B cell (primary cell): ENCODE measurements at regions of chr20 and their contacts with region 1.

Region 1: DNA sequence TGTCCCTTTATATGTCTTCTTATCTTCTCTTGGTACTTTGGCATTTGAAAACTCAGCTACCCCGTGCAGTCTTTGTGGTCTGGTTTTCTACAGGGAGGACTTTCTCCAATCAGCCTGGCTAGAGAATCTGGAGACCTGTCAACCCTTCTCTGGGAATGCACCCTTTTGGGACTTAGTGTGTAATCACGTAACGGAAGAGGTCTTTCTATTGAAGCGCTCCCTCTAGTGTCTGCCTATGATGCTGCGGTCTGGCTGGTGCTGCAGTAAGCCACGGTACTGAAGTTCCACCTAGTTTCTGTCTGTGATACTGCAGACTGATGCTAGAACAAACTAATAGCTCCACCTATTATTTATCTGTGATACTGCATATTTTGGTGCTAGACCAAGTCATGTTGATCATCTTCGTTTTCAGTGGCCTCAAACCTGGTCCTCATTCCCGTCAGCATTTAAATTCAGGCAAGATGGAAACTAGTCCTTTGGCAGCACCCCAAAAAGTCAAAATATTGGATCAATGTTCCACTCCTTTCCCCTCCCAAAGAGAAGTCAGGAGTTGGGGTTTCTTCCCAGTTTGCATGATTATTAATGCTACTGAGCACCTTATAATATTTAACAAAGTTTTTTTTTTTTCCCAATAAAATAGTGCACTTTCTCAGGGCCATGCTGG is 12.5 kb upstream of the SIRPB2 start:
- DNase-seq: peak; percentile 91
- ATAC-seq: peak; percentile 100
- H3K4me3 ChIP-seq: no peak overlapping the region
- H3K4me3 Mint-ChIP-seq: no peak overlapping the region
- H3K27ac ChIP-seq: no peak overlapping the region
- H3K27ac Mint-ChIP-seq: no peak overlapping the region
- H3K4me1 ChIP-seq: peaks cover 0 to 3% of the 10 kb centered on the region in 2 donors
- H3K4me1 Mint-ChIP-seq: peaks cover 2% of the 10 kb centered on the region
- H3K27me3 ChIP-seq: peaks cover 0 to 29% (median 10%) of the 10 kb centered on the region in 4 experiments
- H3K27me3 Mint-ChIP-seq: peaks cover 58% of the 10 kb centered on the region
- CTCF ChIP-seq: peak; percentile 100

Region 2: DNA sequence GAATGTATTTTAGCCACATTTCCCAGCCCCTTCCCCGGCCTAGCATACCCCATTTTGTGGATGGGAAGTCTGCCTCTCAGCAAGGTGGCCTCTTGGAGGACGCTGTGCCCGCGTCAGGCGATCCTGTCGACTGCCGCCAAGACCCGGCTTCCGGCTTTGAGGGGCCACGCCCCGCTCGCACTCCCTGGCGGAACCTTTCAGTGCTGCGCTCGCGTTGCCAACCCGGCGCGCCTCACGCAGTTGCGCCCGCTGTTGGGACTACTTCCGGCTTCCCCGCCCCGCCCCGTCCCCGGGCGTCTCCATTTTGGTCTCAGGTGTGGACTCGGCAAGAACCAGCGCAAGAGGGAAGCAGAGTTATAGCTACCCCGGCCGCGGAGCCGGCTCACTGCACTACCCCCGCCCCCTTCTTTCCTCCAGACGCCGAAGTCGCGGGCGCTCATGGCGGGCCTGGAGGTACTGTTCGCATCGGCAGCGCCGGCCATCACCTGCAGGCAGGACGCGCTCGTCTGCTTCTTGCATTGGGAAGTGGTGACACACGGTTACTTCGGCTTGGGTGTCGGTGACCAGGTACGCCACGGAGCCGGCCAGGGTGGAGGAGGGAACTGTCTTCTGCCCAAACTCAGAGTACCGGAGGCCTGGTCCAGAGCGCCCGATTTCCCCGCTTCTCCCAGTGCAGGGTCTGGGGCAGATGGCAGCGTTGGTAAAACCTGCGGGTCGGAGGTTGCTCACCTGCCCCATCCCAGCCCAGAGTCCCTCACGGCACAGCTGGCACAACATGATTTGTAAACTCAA is 385.2 kb before region 1 on chr20 and contains the start of gene PSMF1:
- CTCF ChIA-PET with region 1: interaction called, 4 read pairs
- POLR2A ChIA-PET with region 1: no interaction called
- intact Hi-C with region 1: loop called (anchors 1 kb)
- DNase-seq: peak; percentile 97
- ATAC-seq: peak; percentile 94
- H3K4me3 ChIP-seq: peak within 1 kb of the TSS; percentile 78 to 97 (median 85)
- H3K4me3 Mint-ChIP-seq: peak within 1 kb of the TSS; percentile 91
- H3K27ac ChIP-seq: peak within 1 kb of the TSS; percentile 70 to 91
- H3K27ac Mint-ChIP-seq: peak within 1 kb of the TSS; percentile 93
- H3K4me1 ChIP-seq: peaks cover 42 to 53% of the 10 kb centered on the region in 2 donors
- H3K4me1 Mint-ChIP-seq: peaks cover 62% of the 10 kb centered on the region
- H3K27me3 ChIP-seq: no peaks in the 10 kb centered on the region
- H3K27me3 Mint-ChIP-seq: no peaks in the 10 kb centered on the region
- CTCF ChIP-seq: no peak
- total RNA-seq, gene PSMF1: 113 and 114 TPM in 2 replicates

Region 3: GRCh38 chr20:1325173-1326030 is 178.3 kb before region 1 on chr20:
- CTCF ChIA-PET with region 1: interaction called, 8 read pairs
- POLR2A ChIA-PET with region 1: no interaction called
- intact Hi-C with region 1: loop called (anchors 1 kb)
- DNase-seq: peak; percentile 99
- ATAC-seq: peak; percentile 89
- H3K4me3 ChIP-seq: peak overlapping the region; percentile 75 to 99 (median 93)
- H3K4me3 Mint-ChIP-seq: no peak overlapping the region
- H3K27ac ChIP-seq: peak overlapping the region; percentile 92 to 98
- H3K27ac Mint-ChIP-seq: no peak overlapping the region
- H3K4me1 ChIP-seq: peaks cover 27 to 28% of the 10 kb centered on the region in 2 donors
- H3K4me1 Mint-ChIP-seq: peaks cover 31% of the 10 kb centered on the region
- H3K27me3 ChIP-seq: no peaks in the 10 kb centered on the region
- H3K27me3 Mint-ChIP-seq: no peaks in the 10 kb centered on the region
- CTCF ChIP-seq: no peak

Region 4: DNA sequence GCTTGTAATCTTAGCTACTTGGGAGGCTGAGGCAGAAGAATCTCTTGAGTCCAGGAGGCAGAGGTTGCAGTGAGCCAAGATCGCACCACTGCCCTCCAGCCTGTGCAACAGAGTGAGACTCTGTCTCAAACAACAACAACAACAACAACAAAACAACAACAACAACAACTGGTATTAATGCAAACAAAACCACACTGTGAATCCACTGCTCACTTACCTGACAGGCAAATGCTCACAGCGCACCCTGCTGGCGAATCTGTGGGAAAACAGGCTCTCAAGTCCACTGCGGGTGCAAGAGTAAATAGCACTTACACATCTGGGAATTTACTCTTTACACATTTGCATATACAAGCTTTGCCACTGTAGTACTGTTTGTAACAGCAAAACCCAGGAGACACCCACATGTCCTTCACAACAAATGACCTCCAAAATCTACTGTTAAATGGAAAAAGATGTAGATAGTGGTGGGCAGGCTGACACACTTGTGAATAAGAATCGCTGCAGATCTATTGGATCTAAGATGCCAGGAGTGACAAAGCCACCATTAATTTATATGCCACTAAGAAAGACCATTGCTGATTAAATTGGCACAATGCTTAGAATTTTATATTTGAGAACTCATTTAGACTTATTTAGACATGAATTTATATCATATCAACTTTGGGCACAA is 66.3 kb before region 1 on chr20:
- CTCF ChIA-PET with region 1: interaction called, 71 read pairs
- POLR2A ChIA-PET with region 1: interaction called, 5 read pairs
- intact Hi-C with region 1: loop called (anchors 1 kb)
- DNase-seq: peak; percentile 83
- ATAC-seq: peak; percentile 51
- H3K4me3 ChIP-seq: no peak overlapping the region
- H3K4me3 Mint-ChIP-seq: no peak overlapping the region
- H3K27ac ChIP-seq: no peak overlapping the region
- H3K27ac Mint-ChIP-seq: peak overlapping the region; percentile 50
- H3K4me1 ChIP-seq: peaks cover 20 to 23% of the 10 kb centered on the region in 2 donors
- H3K4me1 Mint-ChIP-seq: peaks cover 35% of the 10 kb centered on the region
- H3K27me3 ChIP-seq: no peaks in the 10 kb centered on the region
- H3K27me3 Mint-ChIP-seq: peaks cover 3% of the 10 kb centered on the region
- CTCF ChIP-seq: peak; percentile 89

Region 5: GRCh38 chr20:1466211-1467081 is 37.2 kb before region 1 on chr20 and contains the start of gene NSFL1C:
- CTCF ChIA-PET with region 1: interaction called, 85 read pairs
- POLR2A ChIA-PET with region 1: interaction called, 4 read pairs
- intact Hi-C with region 1: loop called (anchors 1 kb)
- DNase-seq: peak; percentile 97
- ATAC-seq: peak; percentile 92
- H3K4me3 ChIP-seq: peak within 1 kb of the TSS; percentile 69 to 92 (median 90)
- H3K4me3 Mint-ChIP-seq: peak within 1 kb of the TSS; percentile 90
- H3K27ac ChIP-seq: peak within 1 kb of the TSS; percentile 79 to 92
- H3K27ac Mint-ChIP-seq: peak within 1 kb of the TSS; percentile 93
- H3K4me1 ChIP-seq: peaks cover 49 to 54% of the 10 kb centered on the region in 2 donors
- H3K4me1 Mint-ChIP-seq: peaks cover 69% of the 10 kb centered on the region
- H3K27me3 ChIP-seq: no peaks in the 10 kb centered on the region
- H3K27me3 Mint-ChIP-seq: no peaks in the 10 kb centered on the region
- CTCF ChIP-seq: peak; percentile 100
- total RNA-seq, gene NSFL1C: 80.3 and 84.0 TPM in 2 replicates

Region 6: DNA sequence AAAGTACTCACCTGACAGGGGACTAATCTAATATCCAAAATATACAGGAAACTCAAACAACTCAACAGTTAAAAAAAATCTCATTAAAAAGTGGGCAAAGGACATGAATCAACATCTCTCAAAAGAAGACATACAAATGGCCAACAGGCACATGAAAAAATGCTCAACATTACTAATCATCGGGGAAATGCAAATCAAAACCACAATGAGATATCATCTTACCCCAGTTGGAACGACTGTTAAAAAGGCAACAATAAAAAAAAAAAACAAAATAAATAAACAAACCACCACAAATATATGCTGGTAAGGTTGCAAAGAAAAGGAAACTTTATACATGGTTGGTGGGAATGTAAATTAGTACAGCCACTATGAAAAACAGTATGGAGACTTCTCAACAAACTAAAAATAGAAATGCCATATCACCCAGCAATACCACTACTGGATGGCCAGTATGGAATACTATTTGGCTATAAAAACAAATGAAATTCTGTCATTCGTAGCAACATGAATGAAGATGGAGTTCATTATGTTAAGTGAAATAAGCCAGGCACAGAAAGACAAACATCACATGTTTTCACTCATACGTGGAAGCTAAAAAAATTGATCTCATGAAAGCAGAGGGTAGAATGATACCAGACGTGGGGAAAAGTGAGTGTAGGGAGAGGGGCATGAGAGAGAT is 19.1 kb before region 1 on chr20:
- CTCF ChIA-PET with region 1: interaction called, 15 read pairs
- POLR2A ChIA-PET with region 1: no interaction called
- intact Hi-C with region 1: no loop called
- DNase-seq: no peak
- ATAC-seq: no peak
- H3K4me3 ChIP-seq: no peak overlapping the region
- H3K4me3 Mint-ChIP-seq: no peak overlapping the region
- H3K27ac ChIP-seq: no peak overlapping the region
- H3K27ac Mint-ChIP-seq: no peak overlapping the region
- H3K4me1 ChIP-seq: no peaks in the 10 kb centered on the region
- H3K4me1 Mint-ChIP-seq: peaks cover 2% of the 10 kb centered on the region
- H3K27me3 ChIP-seq: no peaks in the 10 kb centered on the region
- H3K27me3 Mint-ChIP-seq: peaks cover 53% of the 10 kb centered on the region
- CTCF ChIP-seq: no peak

Region 7: DNA sequence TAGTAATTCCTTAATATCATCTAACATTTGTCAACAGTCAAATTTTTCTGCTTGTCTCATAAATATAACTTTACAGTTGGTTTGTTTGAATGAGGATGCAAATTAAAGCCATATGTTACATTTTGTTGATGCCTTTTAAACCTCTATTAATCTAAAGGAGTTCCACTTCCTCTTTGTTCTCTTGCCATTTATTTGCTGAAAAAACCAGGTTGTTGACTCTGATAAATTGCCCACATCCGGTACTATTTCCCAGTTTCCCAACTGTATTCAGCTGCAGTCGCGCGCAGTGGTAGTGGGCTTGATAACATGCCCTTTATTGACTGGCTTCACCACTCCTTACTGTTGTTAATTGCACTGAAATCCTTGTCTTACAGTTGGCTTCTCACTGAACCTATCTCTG is 20.3 kb after region 1 on chr20:
- CTCF ChIA-PET with region 1: interaction called, 12 read pairs
- POLR2A ChIA-PET with region 1: no interaction called
- intact Hi-C with region 1: no loop called
- DNase-seq: peak; percentile 29
- ATAC-seq: no peak
- H3K4me3 ChIP-seq: no peak overlapping the region
- H3K4me3 Mint-ChIP-seq: peak overlapping the region; percentile 42
- H3K27ac ChIP-seq: no peak overlapping the region
- H3K27ac Mint-ChIP-seq: no peak overlapping the region
- H3K4me1 ChIP-seq: peaks cover 13 to 20% of the 10 kb centered on the region in 2 donors
- H3K4me1 Mint-ChIP-seq: peaks cover 25% of the 10 kb centered on the region
- H3K27me3 ChIP-seq: peaks cover 0 to 6% (median 0%) of the 10 kb centered on the region in 4 experiments
- H3K27me3 Mint-ChIP-seq: peaks cover 14% of the 10 kb centered on the region
- CTCF ChIP-seq: no peak

Region 8: DNA sequence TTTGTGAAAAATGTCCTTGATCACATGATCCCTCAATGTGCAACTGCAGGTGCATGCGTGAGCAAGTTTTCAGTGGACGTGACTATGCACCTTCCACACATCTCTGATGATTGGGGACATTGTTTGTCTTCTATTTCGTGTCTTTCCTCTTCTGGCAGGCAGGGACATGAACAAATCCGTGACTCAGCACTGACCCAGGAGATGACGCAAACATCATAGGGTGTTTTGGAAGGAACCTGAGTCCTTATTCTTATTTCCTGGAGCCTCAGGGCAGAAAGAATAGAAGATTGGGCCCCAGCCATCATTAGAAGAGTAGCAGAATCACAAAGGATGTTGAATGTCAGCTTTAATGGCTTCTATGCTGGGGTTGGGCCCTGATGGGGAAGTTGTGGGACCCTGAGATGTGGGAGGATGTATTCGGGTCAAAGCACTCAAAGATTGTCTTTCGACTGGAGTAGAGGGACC is 65.8 kb after region 1 on chr20:
- CTCF ChIA-PET with region 1: no interaction called
- POLR2A ChIA-PET with region 1: no interaction called
- intact Hi-C with region 1: no loop called
- DNase-seq: no peak
- ATAC-seq: no peak
- H3K4me3 ChIP-seq: no peak overlapping the region
- H3K4me3 Mint-ChIP-seq: no peak overlapping the region
- H3K27ac ChIP-seq: no peak overlapping the region
- H3K27ac Mint-ChIP-seq: no peak overlapping the region
- H3K4me1 ChIP-seq: no peaks in the 10 kb centered on the region
- H3K4me1 Mint-ChIP-seq: no peaks in the 10 kb centered on the region
- H3K27me3 ChIP-seq: no peaks in the 10 kb centered on the region
- H3K27me3 Mint-ChIP-seq: peaks cover 21% of the 10 kb centered on the region
- CTCF ChIP-seq: no peak

Region 9: GRCh38 chr20:1844325-1845162 is 340.8 kb after region 1 on chr20:
- CTCF ChIA-PET with region 1: no interaction called
- POLR2A ChIA-PET with region 1: no interaction called
- intact Hi-C with region 1: no loop called
- DNase-seq: peak; percentile 91
- ATAC-seq: peak; percentile 98
- H3K4me3 ChIP-seq: peak overlapping the region in 1 of 5 experiments; percentile 9
- H3K4me3 Mint-ChIP-seq: peak overlapping the region; percentile 77
- H3K27ac ChIP-seq: peak overlapping the region; percentile 29 to 55
- H3K27ac Mint-ChIP-seq: peak overlapping the region; percentile 91
- H3K4me1 ChIP-seq: peaks cover 46 to 50% of the 10 kb centered on the region in 2 donors
- H3K4me1 Mint-ChIP-seq: peaks cover 69% of the 10 kb centered on the region
- H3K27me3 ChIP-seq: no peaks in the 10 kb centered on the region
- H3K27me3 Mint-ChIP-seq: no peaks in the 10 kb centered on the region
- CTCF ChIP-seq: no peak